ENCODE measurements at regions of chr15 and their contacts with region 1.

Region 1: DNA sequence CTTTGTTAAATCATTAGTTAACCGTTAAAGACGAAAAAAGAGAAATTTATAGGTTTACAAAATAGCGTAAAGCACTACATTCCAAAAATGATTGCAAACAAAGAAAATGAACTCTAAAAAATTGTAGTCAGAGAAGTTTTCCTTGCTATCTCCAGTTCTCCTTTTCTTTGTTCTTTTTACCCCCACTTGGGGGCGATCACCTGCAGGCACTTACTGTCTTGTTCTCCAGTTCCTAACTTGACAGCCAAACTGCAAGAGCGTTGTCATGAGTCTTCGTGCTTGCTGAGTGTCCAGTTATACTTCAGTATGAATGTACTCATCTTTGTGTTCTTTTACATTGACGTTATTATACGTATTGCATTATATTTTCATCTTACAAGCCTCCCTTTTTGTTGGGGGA is 54.5 kb downstream of the CHD2 start:
- DNase-seq: no peak
- H3K4me3 Mint-ChIP-seq: no peak overlapping the region
- H3K27ac Mint-ChIP-seq: no peak overlapping the region
- H3K4me1 Mint-ChIP-seq: peaks cover 18% of the 10 kb centered on the region
- H3K27me3 Mint-ChIP-seq: no peaks in the 10 kb centered on the region

Region 2: DNA sequence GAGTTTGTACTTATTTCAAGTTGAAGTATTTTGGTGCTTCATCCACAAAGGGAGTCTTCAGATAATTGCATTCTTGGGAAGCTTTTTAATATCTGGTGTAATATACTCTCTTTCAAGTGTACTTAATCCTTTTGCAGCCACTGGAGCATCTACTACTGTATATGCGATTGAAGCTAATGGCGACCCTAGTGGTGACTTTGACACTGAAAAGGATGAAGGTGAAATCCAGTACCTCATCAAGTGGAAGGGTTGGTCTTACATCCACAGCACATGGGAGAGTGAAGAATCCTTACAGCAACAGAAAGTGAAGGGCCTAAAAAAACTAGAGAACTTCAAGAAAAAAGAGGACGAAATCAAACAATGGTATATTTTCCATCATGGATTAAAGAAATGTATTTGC is 11.9 kb before region 1 on chr15:
- intact Hi-C with region 1: loop called (anchors 2 kb)
- DNase-seq: no peak
- H3K4me3 Mint-ChIP-seq: no peak overlapping the region
- H3K27ac Mint-ChIP-seq: peak overlapping the region; percentile 8
- H3K4me1 Mint-ChIP-seq: peaks cover 20% of the 10 kb centered on the region
- H3K27me3 Mint-ChIP-seq: no peaks in the 10 kb centered on the region

Region 3: DNA sequence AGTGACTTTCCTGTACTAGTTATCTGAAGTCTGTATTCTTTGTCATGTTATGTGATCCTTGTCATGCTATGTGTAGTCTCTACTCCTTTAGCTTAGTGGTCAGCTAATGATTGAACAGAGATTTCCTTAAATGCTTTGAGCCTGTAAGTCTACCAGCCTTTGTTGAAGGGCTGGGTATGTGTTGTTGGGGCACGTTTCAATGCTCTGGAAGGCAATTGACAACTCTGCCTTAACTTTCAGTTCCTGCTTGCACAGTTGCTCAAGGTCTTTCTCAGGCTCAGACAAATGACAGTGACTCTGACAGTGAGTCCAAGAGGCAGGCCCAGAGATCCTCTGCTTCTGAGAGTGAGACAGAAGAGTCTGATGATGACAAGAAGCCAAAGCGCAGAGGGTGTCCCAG is 34.9 kb after region 1 on chr15:
- intact Hi-C with region 1: loop called (anchors 5 kb)
- DNase-seq: no peak
- H3K4me3 Mint-ChIP-seq: no peak overlapping the region
- H3K27ac Mint-ChIP-seq: peak overlapping the region; percentile 36
- H3K4me1 Mint-ChIP-seq: peaks cover 11% of the 10 kb centered on the region
- H3K27me3 Mint-ChIP-seq: no peaks in the 10 kb centered on the region

Region 4: GRCh38 chr15:93018580-93018979 is 64.0 kb after region 1 on chr15:
- intact Hi-C with region 1: loop called (anchors 5 kb)
- DNase-seq: no peak
- H3K4me3 Mint-ChIP-seq: peak overlapping the region; percentile 11
- H3K27ac Mint-ChIP-seq: peak overlapping the region; percentile 72
- H3K4me1 Mint-ChIP-seq: peaks cover 64% of the 10 kb centered on the region
- H3K27me3 Mint-ChIP-seq: no peaks in the 10 kb centered on the region

Measured in activated CD4-positive, alpha-beta T cell treated with anti-CD3 and anti-CD28 coated beads, Interleukin-2, amount 10 ng/mL, durations not matched to agents 24 days and 14 days (primary cell).